WTC11 (cell line): ENCODE measurements at regions of chr19 and their contacts with region 1.

Region 1: DNA sequence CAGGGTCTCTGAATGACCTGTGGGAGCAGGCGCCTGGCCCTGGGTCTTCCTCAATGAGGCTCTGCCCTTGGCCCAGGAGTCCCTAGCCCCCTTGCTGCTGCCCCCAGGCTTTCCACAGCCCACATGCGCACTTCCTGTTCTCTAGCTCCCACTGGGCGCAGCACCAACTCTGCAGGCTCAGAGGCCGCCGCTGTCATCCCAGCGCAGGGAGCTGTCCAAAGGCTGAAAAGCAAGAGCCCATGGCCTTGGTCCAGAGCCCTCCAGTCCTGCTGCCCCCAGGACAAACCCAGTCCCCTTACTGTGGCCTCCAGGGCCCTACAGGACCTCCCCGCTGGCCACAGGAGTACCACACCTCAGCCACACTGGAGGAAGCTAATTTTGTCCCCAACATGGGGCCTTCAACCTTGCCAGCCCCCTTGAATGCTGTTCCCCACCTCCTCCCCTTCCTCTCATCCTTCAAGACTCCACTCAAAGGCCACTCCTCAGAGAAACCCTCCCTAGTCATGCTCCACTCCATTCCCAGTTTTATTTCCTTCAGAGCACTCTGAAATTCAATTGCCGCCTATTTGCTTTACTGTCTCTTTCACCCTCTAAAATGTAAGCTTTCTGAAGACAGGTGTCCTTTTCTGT is 8.0 kb upstream of the POU2F2 start:
- DNase-seq: peak; percentile 91
- ATAC-seq: peak; percentile 95
- H3K4me3 Mint-ChIP-seq: no peak overlapping the region
- H3K27ac Mint-ChIP-seq: no peak overlapping the region
- H3K4me1 Mint-ChIP-seq: peaks cover 6% of the 10 kb centered on the region; the same call in 1 of the 2 replicates
- H3K27me3 Mint-ChIP-seq: peaks cover 15% of the 10 kb centered on the region
- CTCF ChIP-seq: no peak

Region 2: DNA sequence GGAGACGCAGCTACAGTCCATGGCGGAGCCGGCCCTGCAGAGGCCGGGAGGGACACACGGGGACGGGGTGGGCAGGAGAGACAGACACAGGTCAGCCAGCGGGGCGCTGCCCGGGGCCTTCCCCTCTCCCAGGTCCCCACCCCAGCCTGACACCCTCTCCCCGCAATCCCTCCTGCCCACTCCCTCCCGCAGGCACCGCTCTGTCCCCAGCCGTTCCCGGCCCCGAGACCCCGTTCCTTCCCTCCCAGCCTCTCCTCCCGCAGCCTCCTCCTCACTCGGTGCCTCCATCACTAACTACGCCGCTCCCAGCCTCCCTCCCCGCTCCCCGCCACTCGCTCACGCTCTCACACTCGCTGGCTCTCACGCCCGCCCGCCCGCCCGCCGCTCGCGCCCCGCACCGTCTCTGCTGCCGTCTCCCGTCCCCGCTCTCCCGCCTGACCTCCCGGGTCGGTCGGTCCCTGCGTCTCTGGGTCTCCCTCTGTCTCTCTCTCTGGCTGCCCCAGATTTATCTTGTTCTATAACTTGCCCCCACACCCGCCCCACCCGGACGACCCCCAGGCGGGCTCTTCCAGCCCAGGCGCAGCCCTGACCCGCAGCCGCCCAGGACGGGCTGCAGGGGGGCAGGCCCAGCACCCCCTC is 227.2 kb before region 1 on chr19:
- CTCF ChIA-PET with region 1: no interaction called
- POLR2A ChIA-PET with region 1: no interaction called
- DNase-seq: peak; percentile 48
- ATAC-seq: peak; percentile 24
- H3K4me3 Mint-ChIP-seq: peak overlapping the region; percentile 68
- H3K27ac Mint-ChIP-seq: no peak overlapping the region
- H3K4me1 Mint-ChIP-seq: peaks cover 9% of the 10 kb centered on the region
- H3K27me3 Mint-ChIP-seq: peaks cover 7% of the 10 kb centered on the region
- CTCF ChIP-seq: no peak

Region 3: DNA sequence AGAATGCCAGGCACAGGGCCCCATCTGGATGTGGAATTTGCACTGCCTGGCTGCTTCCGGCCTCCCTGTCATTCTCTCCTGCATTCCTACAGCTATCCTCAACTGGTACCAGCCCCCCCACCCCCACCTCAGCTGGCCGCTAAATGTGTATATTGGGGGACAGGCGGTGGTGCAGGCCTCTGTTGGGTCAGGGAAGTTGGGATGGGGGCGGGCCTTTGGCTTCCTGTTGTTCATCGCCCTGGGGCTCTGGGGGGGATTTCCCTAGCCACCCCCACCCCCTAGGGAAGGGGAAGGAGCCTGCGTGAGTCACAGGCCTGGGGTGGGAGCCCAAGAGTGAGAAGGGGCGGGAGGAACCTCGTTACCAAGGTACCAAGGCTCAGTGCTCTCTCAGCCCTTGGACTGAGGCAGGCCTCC is 18.6 kb before region 1 on chr19:
- CTCF ChIA-PET with region 1: no interaction called
- POLR2A ChIA-PET with region 1: no interaction called
- DNase-seq: peak; percentile 36
- ATAC-seq: peak; percentile 25
- H3K4me3 Mint-ChIP-seq: no peak overlapping the region
- H3K27ac Mint-ChIP-seq: no peak overlapping the region
- H3K4me1 Mint-ChIP-seq: peaks cover 12% of the 10 kb centered on the region
- H3K27me3 Mint-ChIP-seq: 0 out of 2 replicates have a peak, but pooled peaks cover 4% of the 10 kb centered on the region
- CTCF ChIP-seq: no peak

Region 4: GRCh38 chr19:42158926-42159325 is 18.7 kb after region 1 on chr19:
- CTCF ChIA-PET with region 1: no interaction called
- POLR2A ChIA-PET with region 1: no interaction called
- DNase-seq: no peak
- ATAC-seq: no peak
- H3K4me3 Mint-ChIP-seq: no peak overlapping the region
- H3K27ac Mint-ChIP-seq: no peak overlapping the region
- H3K4me1 Mint-ChIP-seq: peaks cover 21% of the 10 kb centered on the region
- H3K27me3 Mint-ChIP-seq: peaks cover 40% of the 10 kb centered on the region
- CTCF ChIP-seq: no peak

Region 5: GRCh38 chr19:42480335-42481095 is 340.3 kb after region 1 on chr19:
- CTCF ChIA-PET with region 1: no interaction called
- POLR2A ChIA-PET with region 1: interaction called, 11 read pairs
- DNase-seq: no peak
- ATAC-seq: no peak
- H3K4me3 Mint-ChIP-seq: no peak overlapping the region
- H3K27ac Mint-ChIP-seq: peak overlapping the region; percentile 70
- H3K4me1 Mint-ChIP-seq: peaks cover 30% of the 10 kb centered on the region
- H3K27me3 Mint-ChIP-seq: no peaks in the 10 kb centered on the region
- CTCF ChIP-seq: no peak